ENCODE measurements at regions of chr6 and their contacts with region 1.

Region 1: GRCh38 chr6:39377539-39377950 is 55.0 kb upstream of the KCNK16 start:
- DNase-seq: peak; percentile 44 to 95 (median 80)

Region 2: DNA sequence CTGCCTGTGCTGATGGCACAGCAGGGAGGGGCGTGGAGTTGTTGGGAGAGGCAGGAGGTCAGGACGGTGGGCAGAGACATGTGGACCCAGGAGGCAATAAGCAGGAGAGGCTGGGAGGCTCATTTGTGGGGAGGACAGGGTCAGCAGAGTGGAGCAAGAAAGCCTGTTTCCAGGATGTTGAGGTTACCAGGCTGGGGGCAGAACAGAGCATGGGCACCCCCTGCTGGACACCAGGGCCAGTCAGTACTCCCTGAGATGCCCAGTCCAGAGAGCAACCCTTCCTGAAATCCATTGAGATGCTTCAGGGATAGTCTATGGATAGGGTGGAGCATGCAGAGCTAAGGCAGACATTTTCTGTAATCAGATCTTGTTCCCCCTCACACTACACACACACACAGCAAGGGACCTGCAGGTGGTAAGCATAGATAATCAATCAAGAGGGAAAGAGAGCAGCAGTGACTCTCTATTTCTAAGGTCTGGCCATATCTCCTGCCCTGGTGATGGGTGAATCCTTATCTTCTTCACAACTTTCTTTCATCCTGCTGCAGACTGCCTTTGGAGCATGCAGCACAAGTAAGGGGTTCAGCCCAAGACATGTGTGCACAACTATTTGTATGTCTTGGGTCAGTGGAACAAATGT is 515.1 kb after region 1 on chr6:
- intact Hi-C with region 1: loop called (anchors 1 kb)
- DNase-seq: peak; percentile 47 to 96 (median 78)

Region 3: GRCh38 chr6:40308533-40309306 is 931.2 kb after region 1 on chr6:
- intact Hi-C with region 1: loop called (anchors 5 kb)
- DNase-seq: peak in 5 of 10 donors; percentile 57 to 89 (median 74)

Measured in posterior cingulate gyrus (tissue), 11 donors.